ENCODE measurements at regions of chr15 and their contacts with region 1.

Region 1: DNA sequence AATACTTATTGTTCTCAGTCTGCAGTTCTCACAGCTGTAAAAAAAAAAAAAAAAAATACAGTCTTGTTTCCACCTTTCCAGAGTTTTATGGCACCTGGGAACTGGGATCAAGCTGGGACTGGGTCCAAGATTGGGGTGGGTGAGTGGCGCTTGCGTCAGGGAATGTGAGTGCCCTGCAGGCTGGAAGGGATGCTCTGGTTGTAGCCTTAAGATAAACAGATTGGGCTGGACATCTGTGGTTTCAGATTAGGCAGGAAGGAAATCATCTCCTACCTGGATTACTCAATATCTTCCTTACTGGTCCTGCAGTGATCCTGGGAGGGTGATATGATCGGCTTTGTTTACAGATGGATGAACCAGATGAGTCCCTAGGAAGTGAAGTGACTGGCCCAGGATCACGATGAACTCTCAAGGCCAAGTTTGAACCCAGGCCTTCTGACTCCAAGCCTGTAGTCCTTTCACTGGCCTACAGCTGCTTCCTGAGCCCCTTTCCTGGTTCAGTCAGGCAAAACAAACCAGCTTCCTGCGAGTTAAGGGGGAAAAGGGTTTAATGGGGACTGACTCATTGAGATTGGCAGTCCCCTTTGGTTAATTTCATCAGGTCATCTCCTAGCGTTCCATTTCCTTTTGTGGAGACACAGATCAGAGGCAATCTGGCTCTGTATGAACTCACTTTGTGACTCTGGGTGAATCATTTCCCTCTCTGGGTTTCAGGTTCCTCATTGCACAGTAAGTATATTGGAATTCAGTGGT is 179.8 kb downstream of the THSD4 start:
- DNase-seq: peak; percentile 100
- H3K4me3 ChIP-seq: no peak overlapping the region
- H3K27ac ChIP-seq: peak overlapping the region; percentile 99
- H3K4me1 ChIP-seq: peaks cover 52% of the 10 kb centered on the region
- H3K27me3 ChIP-seq: no peaks in the 10 kb centered on the region
- CTCF ChIP-seq: no peak

Region 2: GRCh38 chr15:71011503-71012155 is 283.4 kb before region 1 on chr15:
- CTCF ChIA-PET with region 1: no interaction called
- dilution Hi-C with region 1: no loop called
- in situ Hi-C with region 1: loop called in 1 of 2 experiments (anchors 25 kb)
- intact Hi-C with region 1: loop called (anchors 1 kb)
- DNase-seq: peak; percentile 57
- H3K4me3 ChIP-seq: no peak overlapping the region
- H3K27ac ChIP-seq: peak overlapping the region; percentile 46
- H3K4me1 ChIP-seq: peaks cover 15% of the 10 kb centered on the region
- H3K27me3 ChIP-seq: no peaks in the 10 kb centered on the region
- CTCF ChIP-seq: peak; percentile 91 to 95

Region 3: GRCh38 chr15:71114896-71115554 is 180.0 kb before region 1 on chr15 and contains the start of gene THSD4:
- CTCF ChIA-PET with region 1: no interaction called
- dilution Hi-C with region 1: no loop called
- in situ Hi-C with region 1: no loop called
- intact Hi-C with region 1: loop called (anchors 1 kb)
- DNase-seq: peak; percentile 66
- H3K4me3 ChIP-seq: peak within 1 kb of the TSS; percentile 71 to 75 (median 75)
- H3K27ac ChIP-seq: peak within 1 kb of the TSS; percentile 90
- H3K4me1 ChIP-seq: peaks cover 31% of the 10 kb centered on the region
- H3K27me3 ChIP-seq: no peaks in the 10 kb centered on the region
- CTCF ChIP-seq: peak; percentile 87 to 99
- total RNA-seq, gene THSD4: 87.7 to 111 TPM

Region 4: DNA sequence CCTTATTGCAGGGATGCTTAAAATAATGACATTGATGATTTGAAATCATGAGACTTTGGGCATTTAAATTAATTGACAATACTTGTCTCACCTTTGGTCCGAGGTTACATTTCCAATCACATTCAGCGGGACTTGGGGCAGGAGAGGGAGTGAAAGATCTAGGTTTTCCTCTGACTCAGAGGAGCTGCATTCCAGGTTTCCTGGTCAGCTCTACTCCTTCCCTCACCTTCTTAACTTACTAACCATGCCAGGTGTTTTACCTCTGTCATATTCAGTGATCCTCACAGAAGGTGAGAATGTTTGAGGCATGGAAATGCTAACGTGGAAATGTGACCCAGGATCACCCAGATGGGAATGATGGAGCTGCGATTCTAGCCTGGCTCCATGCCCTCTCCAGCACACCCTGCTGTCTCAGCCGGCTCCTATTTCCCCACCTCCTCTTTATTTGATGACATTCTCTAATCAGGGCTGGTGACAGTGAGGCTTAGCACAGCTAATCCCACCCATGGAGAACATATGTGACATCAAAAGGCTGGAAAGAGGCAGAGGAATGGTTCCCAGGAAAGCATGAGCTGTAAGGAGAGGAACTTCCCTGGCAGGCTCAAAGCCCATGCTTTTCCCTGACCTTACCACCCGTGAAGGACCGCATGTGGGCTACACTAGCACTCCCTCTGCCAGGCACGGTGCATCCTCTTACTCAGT is 141.1 kb before region 1 on chr15:
- CTCF ChIA-PET with region 1: no interaction called
- dilution Hi-C with region 1: no loop called
- in situ Hi-C with region 1: no loop called
- intact Hi-C with region 1: no loop called
- DNase-seq: peak; percentile 61
- H3K4me3 ChIP-seq: no peak overlapping the region
- H3K27ac ChIP-seq: no peak overlapping the region
- H3K4me1 ChIP-seq: peaks cover 32% of the 10 kb centered on the region
- H3K27me3 ChIP-seq: no peaks in the 10 kb centered on the region
- CTCF ChIP-seq: no peak

Region 5: GRCh38 chr15:71237456-71238188 is 57.4 kb before region 1 on chr15:
- CTCF ChIA-PET with region 1: no interaction called
- dilution Hi-C with region 1: no loop called
- in situ Hi-C with region 1: no loop called
- intact Hi-C with region 1: loop called (anchors 1 kb)
- DNase-seq: peak; percentile 96
- H3K4me3 ChIP-seq: no peak overlapping the region
- H3K27ac ChIP-seq: peak overlapping the region; percentile 57
- H3K4me1 ChIP-seq: peaks cover 11% of the 10 kb centered on the region
- H3K27me3 ChIP-seq: no peaks in the 10 kb centered on the region
- CTCF ChIP-seq: no peak

Region 6: DNA sequence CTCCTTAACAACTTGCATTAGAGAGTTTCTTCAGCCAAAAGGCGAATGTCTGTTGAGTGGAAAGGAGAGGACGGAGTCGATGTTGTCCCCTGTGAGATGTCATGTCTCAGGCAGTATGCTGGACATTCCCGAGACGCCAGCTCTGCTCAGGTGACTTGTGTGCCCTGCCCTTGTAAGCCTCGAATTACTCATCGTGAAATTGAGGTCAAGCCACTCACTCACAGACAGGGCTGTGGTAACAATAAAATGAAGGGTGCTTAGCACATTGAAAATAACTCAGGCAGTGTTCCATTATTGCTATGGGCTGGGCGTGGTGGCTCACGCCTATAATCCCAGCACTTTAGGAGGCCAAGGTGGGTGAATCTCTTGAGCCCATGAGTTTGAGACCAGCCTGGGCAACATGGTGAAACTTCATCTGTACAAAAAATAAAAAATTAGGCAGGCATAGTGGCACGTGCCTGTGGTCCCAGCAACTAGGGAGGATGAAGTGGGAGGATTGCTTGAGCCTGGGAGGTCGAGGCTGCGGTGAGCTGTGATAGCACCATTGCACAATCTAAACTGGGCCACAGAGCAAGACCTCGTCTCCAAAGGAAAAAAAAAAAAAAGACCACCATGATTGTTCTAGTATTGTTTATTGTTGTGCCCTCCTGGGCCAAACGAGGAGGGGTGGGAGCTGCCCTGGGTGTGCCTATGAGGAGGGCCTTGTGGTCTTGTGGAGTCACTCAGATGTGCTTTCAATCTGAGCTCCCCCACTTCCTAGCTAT is 34.6 kb after region 1 on chr15:
- CTCF ChIA-PET with region 1: no interaction called
- dilution Hi-C with region 1: no loop called
- in situ Hi-C with region 1: no loop called
- intact Hi-C with region 1: loop called (anchors 2 kb)
- DNase-seq: peak; percentile 91
- H3K4me3 ChIP-seq: no peak overlapping the region
- H3K27ac ChIP-seq: peak overlapping the region; percentile 59
- H3K4me1 ChIP-seq: peaks cover 32% of the 10 kb centered on the region
- H3K27me3 ChIP-seq: no peaks in the 10 kb centered on the region
- CTCF ChIP-seq: no peak

Region 7: GRCh38 chr15:71357321-71357732 is 62.3 kb after region 1 on chr15:
- CTCF ChIA-PET with region 1: no interaction called
- dilution Hi-C with region 1: no loop called
- in situ Hi-C with region 1: no loop called
- intact Hi-C with region 1: loop called (anchors 5 kb)
- DNase-seq: no peak
- H3K4me3 ChIP-seq: no peak overlapping the region
- H3K27ac ChIP-seq: no peak overlapping the region
- H3K4me1 ChIP-seq: peaks cover 9% of the 10 kb centered on the region
- H3K27me3 ChIP-seq: no peaks in the 10 kb centered on the region
- CTCF ChIP-seq: no peak

Region 8: GRCh38 chr15:71471347-71471746 is 176.3 kb after region 1 on chr15:
- CTCF ChIA-PET with region 1: no interaction called
- dilution Hi-C with region 1: no loop called
- in situ Hi-C with region 1: no loop called
- intact Hi-C with region 1: no loop called
- DNase-seq: peak; percentile 91
- H3K4me3 ChIP-seq: no peak overlapping the region
- H3K27ac ChIP-seq: peak overlapping the region; percentile 85
- H3K4me1 ChIP-seq: peaks cover 19% of the 10 kb centered on the region
- H3K27me3 ChIP-seq: no peaks in the 10 kb centered on the region
- CTCF ChIP-seq: no peak